Left ventricle myocardium inferior (tissue), 1 donor: ENCODE measurements at regions of chr10 and their contacts with region 1.

Region 1: DNA sequence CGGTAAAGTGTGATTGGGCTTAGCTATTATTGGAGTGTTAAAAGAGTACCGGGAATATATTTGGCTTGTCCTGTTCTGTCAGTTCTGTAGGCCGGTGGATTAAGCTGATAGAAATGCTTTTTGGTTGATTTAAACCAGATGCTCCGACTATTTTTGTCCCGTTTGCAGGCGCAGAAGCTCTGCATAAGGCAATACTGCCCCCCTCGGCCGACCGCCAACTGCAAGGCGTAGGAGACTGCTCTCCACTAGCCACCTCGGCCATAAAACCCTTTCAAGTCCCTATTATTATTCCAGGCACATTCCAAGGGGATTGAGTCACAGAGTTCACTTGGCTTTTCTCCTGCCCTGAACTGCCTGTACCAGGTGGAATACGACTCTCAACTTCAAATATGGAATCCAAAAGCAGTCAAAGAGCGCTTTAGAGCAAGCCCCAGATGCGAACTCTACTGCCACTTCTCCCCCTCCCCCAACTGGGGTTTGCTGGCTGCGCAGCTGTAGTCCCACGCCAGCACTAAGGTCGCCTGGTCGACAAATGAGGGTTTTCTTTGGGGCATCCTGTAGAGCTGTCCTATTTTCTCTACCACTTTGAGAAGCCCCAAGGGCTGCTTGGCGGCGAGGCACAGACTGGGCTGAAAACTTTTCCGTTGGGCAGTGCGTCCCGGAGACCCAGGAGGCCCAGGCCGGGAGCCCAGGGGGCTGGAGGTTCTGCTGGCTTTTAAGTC is 108.3 kb downstream of the REEP3 start:
- DNase-seq: peak; percentile 96
- H3K4me3 ChIP-seq: peak overlapping the region; percentile 68
- H3K27ac ChIP-seq: peak overlapping the region; percentile 100
- H3K4me1 ChIP-seq: peaks cover 53% of the 10 kb centered on the region
- H3K27me3 ChIP-seq: no peaks in the 10 kb centered on the region
- CTCF ChIP-seq: peak; percentile 79

Region 2: DNA sequence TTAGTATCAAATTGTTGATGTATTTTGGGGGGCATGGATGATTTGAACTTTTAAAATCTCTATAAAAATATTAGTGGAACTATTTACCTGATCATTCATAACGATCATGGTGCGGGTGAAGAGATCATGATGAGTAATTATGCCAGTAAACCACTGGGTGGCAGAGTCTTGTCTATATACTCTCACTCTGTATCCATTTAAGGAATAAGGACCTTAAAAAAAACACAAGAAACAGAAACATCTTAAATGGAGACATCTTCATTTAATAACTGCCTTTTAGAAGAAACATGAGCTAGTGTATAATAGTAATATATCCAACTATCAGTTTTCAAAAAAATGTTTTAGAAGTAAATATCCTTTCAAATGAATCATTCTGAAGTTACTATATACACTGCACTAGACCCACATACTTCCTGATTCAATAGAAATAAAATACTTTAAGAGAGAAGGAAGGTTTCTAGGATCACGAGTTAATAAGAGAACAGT is 412.4 kb before region 1 on chr10:
- intact Hi-C with region 1: loop called (anchors 10 kb)
- DNase-seq: no peak
- H3K4me3 ChIP-seq: no peak overlapping the region
- H3K27ac ChIP-seq: no peak overlapping the region
- H3K4me1 ChIP-seq: peaks cover 64% of the 10 kb centered on the region
- H3K27me3 ChIP-seq: no peaks in the 10 kb centered on the region
- CTCF ChIP-seq: peak; percentile 77

Region 3: GRCh38 chr10:63521416-63522276 is 107.9 kb before region 1 on chr10:
- intact Hi-C with region 1: loop called (anchors 10 kb)
- DNase-seq: peak; percentile 70
- H3K4me3 ChIP-seq: peak overlapping the region; percentile 84
- H3K27ac ChIP-seq: peak overlapping the region; percentile 99
- H3K4me1 ChIP-seq: peaks cover 78% of the 10 kb centered on the region
- H3K27me3 ChIP-seq: no peaks in the 10 kb centered on the region
- CTCF ChIP-seq: no peak

Region 4: GRCh38 chr10:63707254-63707910 is 77.9 kb after region 1 on chr10:
- intact Hi-C with region 1: loop called (anchors 2 kb)
- DNase-seq: no peak
- H3K4me3 ChIP-seq: no peak overlapping the region
- H3K27ac ChIP-seq: peak overlapping the region; percentile 68
- H3K4me1 ChIP-seq: peaks cover 44% of the 10 kb centered on the region
- H3K27me3 ChIP-seq: no peaks in the 10 kb centered on the region
- CTCF ChIP-seq: no peak